Thyroid gland (tissue), 4 donors: ENCODE measurements at regions of chr11 and their contacts with region 1.

Region 1: DNA sequence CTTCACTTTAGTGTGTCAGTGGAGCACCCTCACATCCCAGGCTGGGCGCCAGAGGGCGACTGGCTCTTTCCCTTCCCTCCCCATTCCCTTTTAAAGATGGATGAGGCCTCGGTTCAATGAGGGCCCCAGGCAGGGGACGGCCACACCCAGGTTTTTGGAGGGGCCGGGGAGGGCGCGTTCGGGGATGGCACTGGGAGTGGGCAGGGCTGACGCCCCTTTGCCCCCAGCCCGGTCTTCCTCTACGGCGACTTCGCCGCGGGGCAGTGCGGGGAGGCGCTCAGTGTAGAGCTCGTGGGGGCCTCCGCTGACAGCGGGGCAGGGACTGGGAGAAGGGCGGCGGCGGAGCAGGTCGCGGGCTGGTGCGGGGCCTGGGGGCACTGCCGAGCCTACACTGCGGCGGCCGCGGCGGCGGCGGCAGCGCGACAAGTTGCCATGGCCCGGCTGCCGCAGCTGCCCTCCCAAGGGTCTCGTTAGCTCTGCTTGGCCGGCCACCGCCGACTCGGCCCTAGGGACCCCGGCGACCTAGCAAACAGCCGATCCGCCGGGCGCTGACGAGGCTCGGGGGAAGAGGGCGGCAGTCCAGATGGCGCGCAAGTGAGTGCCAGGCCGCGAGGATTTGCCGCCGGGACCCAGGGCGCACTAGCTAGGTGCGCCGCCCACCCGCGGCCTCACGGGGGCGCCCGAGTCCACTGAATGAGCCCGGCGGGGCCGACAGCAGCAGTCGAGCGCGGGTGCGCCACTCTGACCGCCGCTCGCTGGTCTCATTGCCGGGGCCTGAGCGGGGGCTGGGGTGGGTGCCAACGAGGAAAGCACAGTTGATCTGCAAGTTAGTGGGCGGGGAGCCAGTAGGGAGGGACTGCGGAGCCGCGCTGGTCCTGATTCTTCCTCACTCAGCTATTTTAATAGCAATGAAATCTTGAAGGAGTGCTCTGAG is 92.7 kb downstream of the RRM1 start:
- DNase-seq: peak; percentile 98
- H3K4me3 ChIP-seq: peak overlapping the region; percentile 39 to 43 (median 40)
- H3K27ac ChIP-seq: peak overlapping the region in 1 of 3 donors; percentile 63
- H3K4me1 ChIP-seq: peaks cover 0 to 5% of the 10 kb centered on the region in 2 donors
- H3K27me3 ChIP-seq: no peaks in the 10 kb centered on the region
- CTCF ChIP-seq: peak; percentile 71 to 98 (median 94)
- POLR2A ChIP-seq: no peak

Region 2: DNA sequence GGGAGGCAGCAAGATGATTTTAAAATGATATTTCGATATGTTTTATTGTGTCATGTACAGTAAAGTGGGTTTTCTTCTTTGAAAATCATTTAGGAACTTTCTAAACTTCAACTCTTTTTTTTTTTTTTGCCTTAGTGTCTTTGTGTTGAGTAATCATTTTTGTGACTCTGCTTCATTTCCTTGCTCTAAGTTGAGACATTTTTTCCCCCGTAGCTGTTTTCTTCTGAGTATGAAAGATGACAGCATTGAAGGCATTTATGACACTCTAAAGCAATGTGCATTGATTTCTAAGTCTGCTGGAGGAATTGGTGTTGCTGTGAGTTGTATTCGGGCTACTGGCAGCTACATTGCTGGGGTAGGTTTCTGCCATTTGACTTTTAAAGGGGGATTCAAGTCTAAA is 69.2 kb before region 1 on chr11:
- intact Hi-C with region 1: no loop called
- DNase-seq: no peak
- H3K4me3 ChIP-seq: no peak overlapping the region
- H3K27ac ChIP-seq: peak overlapping the region in 1 of 3 donors; percentile 4
- H3K4me1 ChIP-seq: peaks cover 0 to 7% of the 10 kb centered on the region in 2 donors
- H3K27me3 ChIP-seq: no peaks in the 10 kb centered on the region
- CTCF ChIP-seq: no peak
- POLR2A ChIP-seq: no peak

Region 3: GRCh38 chr11:4493480-4493818 is 306.1 kb after region 1 on chr11:
- intact Hi-C with region 1: loop called (anchors 5 kb)
- DNase-seq: no peak
- H3K4me3 ChIP-seq: no peak overlapping the region
- H3K27ac ChIP-seq: no peak overlapping the region
- H3K4me1 ChIP-seq: peaks cover 4 to 10% of the 10 kb centered on the region in 2 donors
- H3K27me3 ChIP-seq: no peaks in the 10 kb centered on the region
- CTCF ChIP-seq: peak in 2 of 6 experiments; percentile 3 to 43
- POLR2A ChIP-seq: no peak

Region 4: DNA sequence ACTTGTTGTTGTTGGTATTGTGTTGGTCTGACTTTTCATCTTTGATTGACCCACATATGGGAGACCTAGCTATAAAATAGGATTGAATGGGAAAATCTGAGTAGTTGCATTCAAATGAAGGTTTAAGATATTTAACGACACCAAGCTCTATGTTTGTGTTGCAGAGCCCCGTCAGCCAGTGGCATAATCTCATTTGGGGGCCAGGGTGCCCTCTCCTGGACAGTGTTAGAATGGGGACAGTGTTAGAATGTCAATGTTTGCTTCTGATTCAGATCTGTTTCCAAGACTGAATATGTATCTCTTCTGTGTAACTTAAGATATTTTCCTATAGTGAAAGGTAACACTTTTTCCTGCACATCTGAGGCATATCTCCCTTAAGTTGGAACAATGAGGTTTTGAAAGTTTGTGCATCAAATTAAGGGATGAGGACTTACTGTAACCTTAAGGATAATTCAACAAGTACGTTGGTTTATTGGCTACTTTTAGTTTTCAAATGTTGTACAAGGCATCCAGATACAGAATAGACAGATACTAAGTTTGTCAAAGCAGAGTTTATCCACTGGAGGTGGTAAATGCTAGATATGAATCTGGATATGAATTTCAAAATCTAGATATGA is 352.4 kb after region 1 on chr11:
- intact Hi-C with region 1: loop called (anchors 5 kb)
- DNase-seq: peak; percentile 62 to 72
- H3K4me3 ChIP-seq: no peak overlapping the region
- H3K27ac ChIP-seq: no peak overlapping the region
- H3K4me1 ChIP-seq: no peaks in the 10 kb centered on the region
- H3K27me3 ChIP-seq: no peaks in the 10 kb centered on the region
- CTCF ChIP-seq: peak; percentile 48 to 71 (median 67)
- POLR2A ChIP-seq: no peak